Common myeloid progenitor, CD34-positive (primary cell): ENCODE measurements at regions of chr17 and their contacts with region 1.

Region 1: DNA sequence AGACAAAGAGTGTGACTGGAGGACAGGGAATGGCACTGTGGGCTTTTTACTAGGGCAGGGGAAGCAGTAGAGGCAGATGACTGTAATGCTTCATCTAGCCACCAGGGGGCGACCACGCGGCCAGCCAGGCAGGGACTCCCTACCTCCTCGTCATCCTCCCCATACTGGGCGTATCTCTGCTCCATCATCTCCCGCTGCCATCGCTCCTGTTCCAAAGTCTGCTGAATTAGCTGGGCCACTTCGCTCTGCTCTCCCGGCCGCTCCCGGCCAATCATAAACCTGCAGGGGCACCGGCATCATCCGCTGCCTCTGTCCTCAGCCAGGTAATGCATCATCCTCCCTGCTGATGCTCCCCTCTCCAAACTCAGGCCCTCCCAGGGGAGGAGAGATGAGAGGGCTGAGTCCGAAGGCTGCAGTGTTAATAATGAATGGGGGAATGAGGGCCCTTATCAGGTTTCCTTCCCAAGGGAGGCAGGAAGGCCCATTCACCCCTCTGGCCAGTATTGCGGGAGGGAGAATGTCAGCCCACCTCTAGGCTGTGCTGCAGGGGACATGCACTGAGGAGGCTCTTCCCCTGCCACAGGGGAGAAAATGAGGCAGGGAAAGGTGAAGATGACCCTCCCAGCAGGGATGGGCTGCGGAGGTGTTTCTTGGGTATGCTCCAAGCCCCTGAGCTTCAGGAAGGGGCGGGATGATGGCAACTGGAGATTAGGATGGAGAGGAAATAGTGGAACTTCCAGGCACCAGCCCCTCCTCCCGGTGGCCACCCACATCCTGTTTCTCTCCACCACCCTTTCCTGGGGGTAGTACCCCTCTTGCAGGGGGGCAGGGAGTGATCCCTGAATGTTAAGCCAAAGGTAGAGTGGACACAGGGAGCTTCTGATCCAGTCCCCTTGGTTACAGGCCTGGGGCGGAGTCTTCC is 10.3 kb upstream of the SAMD14 start:
- DNase-seq: peak; percentile 68 to 80 (median 79)
- H3K4me3 ChIP-seq: peak overlapping the region in 5 of 7 experiments; percentile 14 to 64 (median 35)
- H3K27ac ChIP-seq: no peak overlapping the region
- H3K4me1 ChIP-seq: peaks cover 3 to 51% (median 47%) of the 10 kb centered on the region in 4 experiments
- H3K27me3 ChIP-seq: no peaks in the 10 kb centered on the region

Region 2: GRCh38 chr17:50129728-50130558 is 10.3 kb before region 1 on chr17 and contains the start of gene SAMD14:
- CTCF ChIA-PET with region 1: interaction called, 11 read pairs
- POLR2A ChIA-PET with region 1: no interaction called
- DNase-seq: peak in 2 of 3 donors; percentile 77 to 78
- H3K4me3 ChIP-seq: peak within 1 kb of the TSS in 6 of 7 experiments; percentile 40 to 73 (median 56)
- H3K27ac ChIP-seq: no peak within 1 kb of the TSS
- H3K4me1 ChIP-seq: peaks cover 3 to 37% (median 36%) of the 10 kb centered on the region in 4 experiments
- H3K27me3 ChIP-seq: peaks cover 0 to 21% (median 8%) of the 10 kb centered on the region in 5 experiments

Region 3: DNA sequence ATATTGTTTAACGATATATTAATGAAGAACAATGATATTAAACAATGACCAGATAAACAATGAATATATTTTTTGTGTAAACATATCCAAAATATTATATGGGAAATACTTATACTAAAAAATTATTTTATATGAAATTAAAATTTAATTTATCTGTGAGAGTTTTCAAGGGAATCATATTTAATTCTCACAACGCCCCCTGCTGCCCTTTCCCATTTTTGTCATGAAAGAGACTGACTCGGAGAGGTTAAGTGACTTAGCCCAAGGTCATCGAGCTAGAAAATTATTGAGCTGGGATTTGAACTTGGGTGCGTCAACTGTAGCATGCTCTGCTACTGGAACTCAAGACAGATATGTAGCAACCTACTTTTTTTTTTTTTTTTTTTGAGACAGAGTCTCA is 360.8 kb after region 1 on chr17:
- CTCF ChIA-PET with region 1: no interaction called
- POLR2A ChIA-PET with region 1: no interaction called
- DNase-seq: peak; percentile 32 to 53 (median 49)
- H3K4me3 ChIP-seq: no peak overlapping the region
- H3K27ac ChIP-seq: no peak overlapping the region
- H3K4me1 ChIP-seq: peaks cover 0 to 8% (median 0%) of the 10 kb centered on the region in 4 experiments
- H3K27me3 ChIP-seq: no peaks in the 10 kb centered on the region